ENCODE measurements at regions of chrX and their contacts with region 1.

Region 1: DNA sequence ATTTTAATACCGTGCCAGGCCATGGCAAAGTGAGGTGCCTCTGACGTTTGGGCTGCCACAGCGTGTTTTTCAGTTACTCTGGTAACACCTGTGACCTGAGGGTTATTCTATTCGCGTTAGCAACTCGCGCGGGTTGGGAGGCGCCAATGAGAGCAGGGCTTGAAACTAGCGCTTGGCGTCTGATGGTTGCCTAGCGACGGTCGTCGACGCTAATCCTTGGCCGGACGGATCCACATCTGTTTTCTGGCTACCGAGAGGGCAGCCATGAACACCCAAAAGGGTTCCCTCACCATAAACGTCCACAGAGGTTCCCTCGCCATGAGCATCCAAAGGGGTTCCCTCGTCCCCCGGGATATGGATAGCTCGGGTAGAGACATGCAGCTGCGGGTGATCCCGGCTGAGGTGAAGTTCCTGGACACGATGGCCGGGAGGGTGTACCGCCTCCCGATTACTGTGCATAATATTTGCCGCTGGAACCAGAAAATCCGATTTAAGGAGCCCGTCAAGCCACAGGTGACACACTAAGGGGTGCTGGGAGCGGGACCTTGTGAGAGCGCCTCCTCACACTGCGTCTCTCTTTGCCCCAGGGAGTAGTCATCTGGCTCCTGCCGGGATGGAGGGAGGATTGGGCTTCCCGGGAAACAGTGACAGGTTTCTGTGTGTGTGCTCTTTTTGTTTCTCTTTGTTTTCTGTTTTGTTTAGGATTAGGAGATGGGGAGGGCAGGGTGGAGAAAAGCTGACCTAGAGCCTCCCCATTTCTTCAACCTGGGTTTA is at the start of gene CFAP47:
- DNase-seq: peak; percentile 54
- H3K4me3 Mint-ChIP-seq: peak within 1 kb of the TSS; percentile 69
- H3K27ac Mint-ChIP-seq: no peak within 1 kb of the TSS
- H3K4me1 Mint-ChIP-seq: no peaks in the 10 kb centered on the region
- H3K27me3 Mint-ChIP-seq: no peaks in the 10 kb centered on the region
- CTCF ChIP-seq: no peak
- total RNA-seq, gene CFAP47: 0.21 and 1.0 TPM in 2 replicates

Region 2: GRCh38 chrX:34371740-34372139 is 1548.0 kb before region 1 on chrX:
- CTCF ChIA-PET with region 1: no interaction called
- intact Hi-C with region 1: loop called (anchors 5 kb)
- DNase-seq: no peak
- H3K4me3 Mint-ChIP-seq: no peak overlapping the region
- H3K27ac Mint-ChIP-seq: no peak overlapping the region
- H3K4me1 Mint-ChIP-seq: peaks cover 10% of the 10 kb centered on the region
- H3K27me3 Mint-ChIP-seq: no peaks in the 10 kb centered on the region
- CTCF ChIP-seq: no peak

Region 3: GRCh38 chrX:35809781-35810180 is 109.9 kb before region 1 on chrX:
- CTCF ChIA-PET with region 1: no interaction called
- intact Hi-C with region 1: no loop called
- DNase-seq: peak; percentile 30
- H3K4me3 Mint-ChIP-seq: no peak overlapping the region
- H3K27ac Mint-ChIP-seq: peak overlapping the region; percentile 69
- H3K4me1 Mint-ChIP-seq: peaks cover 13% of the 10 kb centered on the region
- H3K27me3 Mint-ChIP-seq: no peaks in the 10 kb centered on the region
- CTCF ChIP-seq: no peak

Measured in Calu3 (cell line).